Right ventricle myocardium inferior (tissue), 1 donor: ENCODE measurements at regions of chr1 and their contacts with region 1.

Region 1: DNA sequence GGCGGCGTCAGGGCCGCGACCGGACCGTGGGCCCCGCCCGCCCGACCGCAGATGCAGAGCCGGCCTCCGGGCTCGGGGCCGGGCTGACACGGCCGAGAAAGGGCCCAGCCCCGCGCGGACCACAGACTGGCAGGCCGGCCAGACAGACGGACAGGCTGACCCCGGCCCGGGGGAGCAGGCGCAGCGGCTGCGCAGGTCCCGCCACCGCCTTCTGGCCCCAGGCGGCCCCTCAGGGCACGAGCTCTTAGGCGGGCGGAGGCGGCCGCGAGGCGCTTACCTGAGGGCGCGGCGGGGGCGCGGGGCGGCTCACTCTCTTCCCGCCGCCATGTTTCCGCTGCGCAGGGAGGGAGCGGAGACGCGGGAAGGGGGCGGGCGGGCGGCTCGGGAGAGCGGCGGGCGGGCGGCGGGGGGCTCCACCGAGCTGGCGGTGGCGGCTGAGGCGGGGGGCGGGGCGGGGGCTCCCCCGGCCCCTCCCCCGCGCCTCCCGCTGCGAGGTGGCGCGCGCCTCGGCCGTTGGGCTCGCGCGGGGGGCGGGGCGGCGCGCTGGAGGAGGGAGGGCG is at the start of gene SCMH1:
- DNase-seq: peak; percentile 80
- ATAC-seq: peak; percentile 60
- total RNA-seq, gene SCMH1: 41.1 TPM

Region 2: GRCh38 chr1:40979233-40980067 is 262.4 kb before region 1 on chr1 and contains the start of gene CTPS1:
- intact Hi-C with region 1: loop called (anchors 5 kb)
- DNase-seq: peak; percentile 97
- ATAC-seq: peak; percentile 97
- total RNA-seq, gene CTPS1: 7.2 TPM

Region 3: GRCh38 chr1:41101950-41102607 is 139.8 kb before region 1 on chr1:
- intact Hi-C with region 1: loop called (anchors 2 kb)
- DNase-seq: peak; percentile 82
- ATAC-seq: peak; percentile 92

Region 4: GRCh38 chr1:41313661-41314131 is 71.8 kb after region 1 on chr1:
- intact Hi-C with region 1: no loop called
- DNase-seq: no peak
- ATAC-seq: no peak

Region 5: GRCh38 chr1:41484372-41485241 is 242.7 kb after region 1 on chr1 and contains the start of gene EDN2:
- intact Hi-C with region 1: no loop called
- DNase-seq: peak; percentile 78
- ATAC-seq: peak; percentile 77
- total RNA-seq, gene EDN2: not detected